CD8-positive, alpha-beta T cell (primary cell): ENCODE measurements at regions of chr15 and their contacts with region 1.

Region 1: DNA sequence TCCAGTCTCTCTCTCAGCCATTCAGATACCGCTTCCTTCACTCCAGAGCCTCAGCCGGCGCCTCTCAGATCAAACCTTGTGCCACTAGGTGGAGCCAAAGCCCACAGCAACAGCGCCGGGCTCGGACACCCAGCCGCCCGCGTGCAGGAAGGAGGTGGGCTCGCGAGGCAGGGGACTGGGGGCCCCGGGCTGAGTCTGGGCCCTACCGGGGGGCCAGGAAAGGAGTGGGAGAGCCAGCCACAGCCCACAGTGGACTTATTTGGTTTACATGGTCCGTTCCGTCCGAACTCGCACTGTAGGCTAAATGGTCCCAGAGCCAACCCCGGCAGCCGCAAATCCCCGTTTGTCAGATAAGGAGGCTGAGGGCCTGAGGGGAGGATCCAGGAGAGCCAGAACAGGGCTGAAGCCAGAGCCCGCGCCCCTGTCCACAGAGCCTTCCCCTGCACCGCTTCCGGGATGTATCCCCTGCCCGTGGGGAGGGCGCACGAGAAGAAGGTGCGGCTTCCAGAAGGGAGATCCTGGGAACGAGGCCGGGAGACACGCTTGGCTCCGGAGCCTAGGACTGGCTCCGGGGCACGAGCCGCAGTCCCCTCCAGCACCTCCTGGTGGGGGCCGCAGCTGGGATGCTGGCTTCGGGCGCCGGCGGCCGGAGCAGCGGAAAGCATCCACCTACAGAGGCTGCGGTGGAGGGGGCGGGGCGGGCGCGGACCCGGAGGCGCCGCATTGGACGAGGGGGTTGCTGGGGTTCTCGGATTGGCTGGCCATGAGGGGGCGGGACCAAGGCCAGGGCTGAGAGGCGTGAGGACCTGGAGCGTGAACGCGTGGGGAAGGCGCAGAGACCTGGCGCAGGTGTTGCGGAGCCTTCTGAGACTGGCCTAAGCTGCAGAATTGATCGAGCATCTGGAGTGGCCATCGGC is 6.5 kb upstream of the CYP11A1 start:
- DNase-seq: peak; percentile 92 to 97 (median 95)
- ATAC-seq: peak; percentile 96
- H3K4me3 ChIP-seq: peak overlapping the region; percentile 89 to 96
- H3K4me3 Mint-ChIP-seq: peak overlapping the region; percentile 82
- H3K27ac ChIP-seq: peak overlapping the region; percentile 45 to 62
- H3K27ac Mint-ChIP-seq: no peak overlapping the region
- H3K4me1 ChIP-seq: peaks cover 15% of the 10 kb centered on the region
- H3K4me1 Mint-ChIP-seq: peaks cover 16% of the 10 kb centered on the region
- H3K27me3 ChIP-seq: no peaks in the 10 kb centered on the region
- H3K27me3 Mint-ChIP-seq: peaks cover 8% of the 10 kb centered on the region
- CTCF ChIP-seq: peak; percentile 86

Region 2: GRCh38 chr15:73617301-73617831 is 756.6 kb before region 1 on chr15:
- CTCF ChIA-PET with region 1: no interaction called
- POLR2A ChIA-PET with region 1: no interaction called
- intact Hi-C with region 1: no loop called
- DNase-seq: no peak
- ATAC-seq: no peak
- H3K4me3 ChIP-seq: no peak overlapping the region
- H3K4me3 Mint-ChIP-seq: no peak overlapping the region
- H3K27ac ChIP-seq: no peak overlapping the region
- H3K27ac Mint-ChIP-seq: no peak overlapping the region
- H3K4me1 ChIP-seq: peaks cover 3% of the 10 kb centered on the region
- H3K4me1 Mint-ChIP-seq: peaks cover 55% of the 10 kb centered on the region
- H3K27me3 ChIP-seq: no peaks in the 10 kb centered on the region
- H3K27me3 Mint-ChIP-seq: no peaks in the 10 kb centered on the region
- CTCF ChIP-seq: no peak

Region 3: DNA sequence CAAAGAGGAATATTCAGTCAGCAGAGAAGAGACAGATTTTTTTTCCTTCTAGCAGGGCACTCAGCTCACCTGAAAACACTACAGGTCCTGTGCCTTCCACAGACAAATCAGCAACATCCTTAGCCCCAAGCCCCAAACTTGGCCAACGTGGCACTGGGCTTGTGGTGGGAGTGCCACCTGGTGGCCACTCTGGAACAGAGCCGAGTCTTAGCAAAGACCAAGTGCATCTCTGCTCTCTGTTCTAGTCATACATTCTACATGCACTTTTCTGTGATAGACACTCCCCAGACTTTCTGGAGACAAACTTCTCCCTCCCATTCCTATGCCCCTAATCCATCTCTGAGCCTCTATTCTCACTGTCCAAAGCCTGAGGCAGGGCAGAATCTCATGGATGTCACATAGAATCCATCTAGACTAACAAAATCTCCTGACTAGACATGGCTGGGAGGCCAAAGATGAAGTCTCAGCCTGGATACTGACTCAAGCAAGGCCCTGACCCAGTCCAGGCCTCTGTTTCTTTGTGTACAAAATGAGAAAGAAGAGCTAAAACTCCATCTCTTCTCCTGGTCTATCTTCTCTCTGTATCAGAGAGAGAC is 64.8 kb after region 1 on chr15:
- CTCF ChIA-PET with region 1: interaction called, 717 read pairs
- POLR2A ChIA-PET with region 1: interaction called, 3 read pairs
- intact Hi-C with region 1: loop called (anchors 1 kb)
- DNase-seq: peak; percentile 55 to 87 (median 76)
- ATAC-seq: peak; percentile 81
- H3K4me3 ChIP-seq: no peak overlapping the region
- H3K4me3 Mint-ChIP-seq: no peak overlapping the region
- H3K27ac ChIP-seq: no peak overlapping the region
- H3K27ac Mint-ChIP-seq: no peak overlapping the region
- H3K4me1 ChIP-seq: peaks cover 9% of the 10 kb centered on the region
- H3K4me1 Mint-ChIP-seq: peaks cover 19% of the 10 kb centered on the region
- H3K27me3 ChIP-seq: no peaks in the 10 kb centered on the region
- H3K27me3 Mint-ChIP-seq: no peaks in the 10 kb centered on the region
- CTCF ChIP-seq: peak; percentile 87

Region 4: GRCh38 chr15:74489518-74490338 is 115.7 kb after region 1 on chr15:
- CTCF ChIA-PET with region 1: interaction called, 11 read pairs
- POLR2A ChIA-PET with region 1: interaction called, 3 read pairs
- intact Hi-C with region 1: loop called (anchors 1 kb)
- DNase-seq: peak; percentile 58 to 90 (median 79)
- ATAC-seq: peak; percentile 93
- H3K4me3 ChIP-seq: peak overlapping the region; percentile 14 to 18
- H3K4me3 Mint-ChIP-seq: peak overlapping the region; percentile 65
- H3K27ac ChIP-seq: peak overlapping the region in 1 of 2 experiments; percentile 55
- H3K27ac Mint-ChIP-seq: peak overlapping the region; percentile 83
- H3K4me1 ChIP-seq: peaks cover 19% of the 10 kb centered on the region
- H3K4me1 Mint-ChIP-seq: peaks cover 22% of the 10 kb centered on the region
- H3K27me3 ChIP-seq: no peaks in the 10 kb centered on the region
- H3K27me3 Mint-ChIP-seq: no peaks in the 10 kb centered on the region
- CTCF ChIP-seq: peak; percentile 59

Region 5: GRCh38 chr15:74787251-74788041 is 413.5 kb after region 1 on chr15:
- CTCF ChIA-PET with region 1: interaction called, 3 read pairs
- POLR2A ChIA-PET with region 1: no interaction called
- intact Hi-C with region 1: loop called in 1 of 2 experiments (anchors 5 kb)
- DNase-seq: peak; percentile 81 to 97 (median 92)
- ATAC-seq: peak; percentile 71
- H3K4me3 ChIP-seq: peak overlapping the region; percentile 83 to 98
- H3K4me3 Mint-ChIP-seq: peak overlapping the region; percentile 83
- H3K27ac ChIP-seq: peak overlapping the region; percentile 53 to 90
- H3K27ac Mint-ChIP-seq: peak overlapping the region; percentile 92
- H3K4me1 ChIP-seq: peaks cover 76% of the 10 kb centered on the region
- H3K4me1 Mint-ChIP-seq: peaks cover 71% of the 10 kb centered on the region
- H3K27me3 ChIP-seq: no peaks in the 10 kb centered on the region
- H3K27me3 Mint-ChIP-seq: no peaks in the 10 kb centered on the region
- CTCF ChIP-seq: peak; percentile 62

Region 6: DNA sequence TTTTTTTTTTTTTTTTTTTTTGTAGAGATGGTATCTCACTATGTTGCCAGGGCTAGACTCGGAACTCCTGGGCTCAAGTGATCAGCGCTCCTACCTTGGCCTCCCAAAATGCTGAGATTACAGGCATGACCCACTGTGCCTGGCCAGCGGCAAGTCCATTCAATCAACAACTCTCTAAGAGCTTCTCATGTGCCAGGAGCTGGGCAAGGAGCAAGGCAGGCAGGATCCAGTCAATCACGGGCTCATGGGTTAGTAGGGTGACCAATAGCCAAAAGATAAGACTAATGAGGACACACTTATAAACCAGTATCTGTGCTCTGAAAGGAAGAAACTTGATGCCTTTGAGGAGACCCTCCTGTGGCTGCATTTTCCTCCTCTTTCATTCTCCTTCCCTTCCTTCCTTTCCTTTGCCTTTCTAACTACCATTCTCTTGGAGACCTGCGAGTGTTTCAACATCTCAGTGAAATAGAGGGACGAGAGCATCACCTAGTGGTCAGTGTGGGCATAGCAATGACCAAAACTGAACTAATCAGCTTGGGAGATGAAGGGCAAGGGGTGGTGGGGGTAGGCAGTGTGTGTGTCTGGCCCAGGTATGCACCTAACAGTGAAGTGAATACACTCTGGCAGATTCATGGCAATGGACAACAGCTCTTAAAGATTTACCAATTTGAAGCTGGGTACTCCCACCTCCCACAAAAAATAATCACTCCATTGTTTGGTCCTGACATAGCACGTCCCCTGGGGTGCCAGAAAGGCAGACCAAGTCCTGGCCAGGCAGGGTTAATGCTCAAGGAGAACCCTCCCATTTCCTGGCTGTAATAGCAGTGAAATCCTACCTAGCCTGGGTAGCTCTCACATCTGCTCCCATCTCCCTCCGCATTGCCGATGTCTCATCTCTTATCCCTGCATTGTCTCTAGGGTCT is 576.4 kb after region 1 on chr15:
- CTCF ChIA-PET with region 1: no interaction called
- POLR2A ChIA-PET with region 1: no interaction called
- intact Hi-C with region 1: loop called (anchors 2 to 5 kb)
- DNase-seq: peak; percentile 65 to 84 (median 79)
- ATAC-seq: peak; percentile 99
- H3K4me3 ChIP-seq: no peak overlapping the region
- H3K4me3 Mint-ChIP-seq: no peak overlapping the region
- H3K27ac ChIP-seq: no peak overlapping the region
- H3K27ac Mint-ChIP-seq: no peak overlapping the region
- H3K4me1 ChIP-seq: no peaks in the 10 kb centered on the region
- H3K4me1 Mint-ChIP-seq: peaks cover 6% of the 10 kb centered on the region
- H3K27me3 ChIP-seq: peaks cover 0 to 2% of the 10 kb centered on the region in 2 experiments
- H3K27me3 Mint-ChIP-seq: no peaks in the 10 kb centered on the region
- CTCF ChIP-seq: peak; percentile 94